ENCODE measurements at regions of chr2 and their contacts with region 1.

Region 1: GRCh38 chr2:42141687-42142546 is 27.2 kb upstream of the EML4 start:
- DNase-seq: peak in 10 of 14 experiments; percentile 11 to 60 (median 36)
- ATAC-seq: peak; percentile 78
- H3K4me3 ChIP-seq: no peak overlapping the region
- H3K4me3 Mint-ChIP-seq: peak overlapping the region; percentile 65
- H3K27ac ChIP-seq: peak overlapping the region; percentile 18 to 19
- H3K27ac Mint-ChIP-seq: peak overlapping the region; percentile 85
- H3K4me1 ChIP-seq: peaks cover 60% of the 10 kb centered on the region
- H3K4me1 Mint-ChIP-seq: peaks cover 57% of the 10 kb centered on the region
- H3K27me3 ChIP-seq: no peaks in the 10 kb centered on the region
- H3K27me3 Mint-ChIP-seq: no peaks in the 10 kb centered on the region
- CTCF ChIP-seq: no peak

Region 2: DNA sequence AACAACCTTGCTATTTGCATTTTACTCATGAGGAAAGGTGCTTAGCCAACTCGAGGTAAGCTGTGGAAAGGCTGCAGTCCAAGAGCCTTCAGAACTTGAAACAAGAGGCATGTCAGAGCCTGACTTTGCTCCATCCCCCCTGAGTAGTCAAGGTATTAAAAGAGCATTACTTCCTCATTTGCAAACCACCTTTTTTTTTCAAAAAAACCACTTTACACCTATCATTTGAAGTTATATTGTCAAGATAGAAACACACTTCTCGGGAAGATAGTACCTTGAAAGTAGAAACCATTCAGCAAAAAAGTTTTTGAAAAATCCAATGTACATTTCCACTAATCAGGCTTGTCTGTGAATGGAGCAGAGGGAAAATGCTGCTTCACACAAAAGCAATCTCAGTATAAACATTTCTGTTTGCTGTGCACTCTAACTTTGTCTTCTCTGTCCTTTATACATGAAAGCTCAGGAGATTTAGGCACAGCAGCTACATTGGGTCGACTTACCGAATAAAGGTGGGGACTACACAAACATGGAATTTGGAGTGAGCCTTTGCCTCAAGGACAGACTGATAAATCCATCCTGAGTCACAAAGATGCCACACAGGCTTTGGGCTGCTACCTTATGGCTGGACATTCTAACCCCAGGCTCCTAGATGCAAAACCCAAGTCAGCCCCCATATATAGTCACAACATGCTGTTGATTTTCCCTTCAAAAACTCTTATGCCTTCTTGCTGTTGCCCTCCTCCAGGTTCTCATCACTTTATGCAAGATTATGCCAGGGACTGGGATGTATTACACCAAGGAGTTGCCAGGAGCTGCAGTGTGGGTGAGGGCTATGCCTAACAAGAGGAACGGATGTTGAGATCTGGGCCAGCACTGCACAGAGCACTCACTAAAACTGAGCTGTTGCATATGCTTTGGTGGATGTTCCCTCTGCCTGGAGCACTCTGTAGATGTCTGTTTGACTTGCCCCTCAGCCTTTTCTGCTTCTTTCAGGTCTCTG is 14.2 kb before region 1 on chr2:
- CTCF ChIA-PET with region 1: interaction called, 3 read pairs
- POLR2A ChIA-PET with region 1: interaction called, 30 read pairs
- intact Hi-C with region 1: loop called in 1 of 2 experiments (anchors 2 kb)
- DNase-seq: peak in 10 of 14 experiments; percentile 20 to 77 (median 40)
- ATAC-seq: peak; percentile 45
- H3K4me3 ChIP-seq: peak overlapping the region; percentile 2
- H3K4me3 Mint-ChIP-seq: peak overlapping the region; percentile 83
- H3K27ac ChIP-seq: peak overlapping the region; percentile 56 to 62
- H3K27ac Mint-ChIP-seq: peak overlapping the region; percentile 86
- H3K4me1 ChIP-seq: peaks cover 94% of the 10 kb centered on the region
- H3K4me1 Mint-ChIP-seq: peaks cover 91% of the 10 kb centered on the region
- H3K27me3 ChIP-seq: no peaks in the 10 kb centered on the region
- H3K27me3 Mint-ChIP-seq: no peaks in the 10 kb centered on the region
- CTCF ChIP-seq: no peak

Region 3: DNA sequence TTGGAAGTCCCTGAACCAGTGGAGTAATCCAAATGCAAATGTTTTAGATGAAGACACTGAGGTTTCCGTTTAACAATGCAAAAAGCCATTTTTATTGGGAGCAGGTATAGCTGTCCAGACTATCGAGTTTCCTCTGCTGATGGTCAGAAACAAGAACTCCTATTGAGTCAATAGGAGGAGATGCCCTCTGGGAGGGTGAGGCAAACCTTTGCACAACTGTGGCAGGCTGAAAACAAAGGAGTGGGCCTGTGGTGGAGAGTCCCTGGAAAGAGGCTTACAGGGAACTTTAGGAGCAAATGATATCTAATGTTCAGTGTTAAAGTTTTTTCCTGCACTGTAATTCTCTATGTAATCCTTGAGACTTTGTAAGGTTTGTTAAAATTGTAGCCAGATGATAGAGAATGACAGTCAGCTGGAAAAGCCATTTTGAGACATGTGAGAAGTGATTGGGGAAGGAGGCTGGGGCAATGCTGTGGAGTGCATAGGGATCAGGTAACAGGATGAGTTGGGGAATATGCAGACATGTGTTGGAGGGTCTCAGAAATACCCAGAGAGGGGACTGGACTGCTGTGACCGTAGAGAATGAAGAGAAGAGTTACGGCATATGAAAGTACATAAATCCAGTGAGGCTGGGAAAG is 12.1 kb after region 1 on chr2:
- CTCF ChIA-PET with region 1: no interaction called
- POLR2A ChIA-PET with region 1: interaction called, 6 read pairs
- intact Hi-C with region 1: loop called in 1 of 2 experiments (anchors 2 kb)
- DNase-seq: no peak
- ATAC-seq: no peak
- H3K4me3 ChIP-seq: no peak overlapping the region
- H3K4me3 Mint-ChIP-seq: no peak overlapping the region
- H3K27ac ChIP-seq: no peak overlapping the region
- H3K27ac Mint-ChIP-seq: no peak overlapping the region
- H3K4me1 ChIP-seq: no peaks in the 10 kb centered on the region
- H3K4me1 Mint-ChIP-seq: no peaks in the 10 kb centered on the region
- H3K27me3 ChIP-seq: no peaks in the 10 kb centered on the region
- H3K27me3 Mint-ChIP-seq: no peaks in the 10 kb centered on the region
- CTCF ChIP-seq: no peak

Region 4: DNA sequence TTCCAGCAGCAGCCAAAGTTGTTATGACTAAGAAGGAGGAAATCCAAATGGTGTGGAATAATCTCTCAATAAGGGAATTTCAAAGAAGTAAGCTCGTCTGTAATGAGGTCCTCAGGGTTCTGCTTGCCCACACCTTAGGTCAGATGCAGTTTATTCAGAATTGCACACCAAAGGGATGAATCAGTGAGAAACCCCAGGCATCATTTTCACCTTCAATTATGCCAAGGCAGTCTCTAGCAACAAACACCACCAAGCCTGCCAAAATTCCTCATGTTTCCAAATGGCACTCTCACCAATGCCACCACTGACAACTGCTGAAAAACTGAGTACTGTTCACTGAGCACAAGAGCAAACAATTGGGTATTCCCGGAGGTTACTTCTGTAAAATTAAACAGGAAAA is 308.2 kb after region 1 on chr2:
- CTCF ChIA-PET with region 1: no interaction called
- POLR2A ChIA-PET with region 1: no interaction called
- intact Hi-C with region 1: no loop called
- DNase-seq: no peak
- ATAC-seq: no peak
- H3K4me3 ChIP-seq: no peak overlapping the region
- H3K4me3 Mint-ChIP-seq: no peak overlapping the region
- H3K27ac ChIP-seq: no peak overlapping the region
- H3K27ac Mint-ChIP-seq: no peak overlapping the region
- H3K4me1 ChIP-seq: no peaks in the 10 kb centered on the region
- H3K4me1 Mint-ChIP-seq: no peaks in the 10 kb centered on the region
- H3K27me3 ChIP-seq: no peaks in the 10 kb centered on the region
- H3K27me3 Mint-ChIP-seq: peaks cover 4% of the 10 kb centered on the region
- CTCF ChIP-seq: no peak